ENCODE measurements at regions of chr6 and their contacts with region 1.

Region 1: GRCh38 chr6:16183187-16183664 is 54.3 kb downstream of the MYLIP start:
- DNase-seq: peak; percentile 61
- CTCF ChIP-seq: peak; percentile 56

Region 2: GRCh38 chr6:15682965-15683822 is 500.0 kb before region 1 on chr6:
- CTCF ChIA-PET with region 1: interaction called, 19 read pairs
- POLR2A ChIA-PET with region 1: no interaction called
- DNase-seq: peak; percentile 34
- CTCF ChIP-seq: no peak

Region 3: GRCh38 chr6:15698471-15698870 is 484.8 kb before region 1 on chr6:
- CTCF ChIA-PET with region 1: interaction called, 126 read pairs
- POLR2A ChIA-PET with region 1: no interaction called
- DNase-seq: no peak
- CTCF ChIP-seq: no peak

Region 4: GRCh38 chr6:16128759-16129622 is 54.2 kb before region 1 on chr6 and contains the start of gene MYLIP:
- CTCF ChIA-PET with region 1: interaction called, 24 read pairs
- POLR2A ChIA-PET with region 1: interaction called, 3 read pairs
- DNase-seq: peak; percentile 98
- CTCF ChIP-seq: peak; percentile 95

Region 5: GRCh38 chr6:16163535-16164300 is 19.5 kb before region 1 on chr6:
- CTCF ChIA-PET with region 1: interaction called, 14 read pairs
- POLR2A ChIA-PET with region 1: no interaction called
- DNase-seq: no peak
- CTCF ChIP-seq: no peak

Region 6: DNA sequence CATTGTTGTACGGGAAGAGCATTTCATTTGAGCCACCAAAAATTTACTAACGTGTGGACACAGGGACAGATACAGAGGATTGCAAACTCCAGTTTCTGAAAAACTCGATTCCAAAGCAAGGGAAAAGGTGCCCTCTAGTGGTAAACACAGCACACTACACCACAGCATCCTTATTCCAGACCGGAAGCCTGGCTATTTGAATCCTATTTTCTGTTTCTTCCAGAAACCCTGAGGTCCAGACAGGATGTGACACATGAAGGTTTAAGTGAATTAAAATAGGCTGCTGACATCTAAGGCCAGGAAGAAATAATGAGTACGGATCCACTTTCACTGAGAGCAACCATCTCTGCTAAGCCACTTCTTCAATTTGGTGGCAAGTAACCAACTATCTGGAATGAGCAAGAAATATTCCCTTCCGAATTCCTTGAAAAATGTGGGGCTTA is 23.4 kb after region 1 on chr6:
- CTCF ChIA-PET with region 1: interaction called, 66 read pairs
- POLR2A ChIA-PET with region 1: no interaction called
- DNase-seq: peak; percentile 68
- CTCF ChIP-seq: peak; percentile 88

Measured in GM10248 (cell line).